ENCODE measurements at regions of chr1 and their contacts with region 1.

Region 1: GRCh38 chr1:3624200-3625136 is at the start of gene TPRG1L:
- DNase-seq: peak; percentile 99
- ATAC-seq: peak; percentile 98
- H3K4me3 Mint-ChIP-seq: peak within 1 kb of the TSS; percentile 89
- H3K27ac Mint-ChIP-seq: peak within 1 kb of the TSS; percentile 69
- H3K4me1 Mint-ChIP-seq: peaks cover 31% of the 10 kb centered on the region
- H3K27me3 Mint-ChIP-seq: no peaks in the 10 kb centered on the region
- total RNA-seq, gene TPRG1L: 6.7 to 7.2 TPM

Region 2: DNA sequence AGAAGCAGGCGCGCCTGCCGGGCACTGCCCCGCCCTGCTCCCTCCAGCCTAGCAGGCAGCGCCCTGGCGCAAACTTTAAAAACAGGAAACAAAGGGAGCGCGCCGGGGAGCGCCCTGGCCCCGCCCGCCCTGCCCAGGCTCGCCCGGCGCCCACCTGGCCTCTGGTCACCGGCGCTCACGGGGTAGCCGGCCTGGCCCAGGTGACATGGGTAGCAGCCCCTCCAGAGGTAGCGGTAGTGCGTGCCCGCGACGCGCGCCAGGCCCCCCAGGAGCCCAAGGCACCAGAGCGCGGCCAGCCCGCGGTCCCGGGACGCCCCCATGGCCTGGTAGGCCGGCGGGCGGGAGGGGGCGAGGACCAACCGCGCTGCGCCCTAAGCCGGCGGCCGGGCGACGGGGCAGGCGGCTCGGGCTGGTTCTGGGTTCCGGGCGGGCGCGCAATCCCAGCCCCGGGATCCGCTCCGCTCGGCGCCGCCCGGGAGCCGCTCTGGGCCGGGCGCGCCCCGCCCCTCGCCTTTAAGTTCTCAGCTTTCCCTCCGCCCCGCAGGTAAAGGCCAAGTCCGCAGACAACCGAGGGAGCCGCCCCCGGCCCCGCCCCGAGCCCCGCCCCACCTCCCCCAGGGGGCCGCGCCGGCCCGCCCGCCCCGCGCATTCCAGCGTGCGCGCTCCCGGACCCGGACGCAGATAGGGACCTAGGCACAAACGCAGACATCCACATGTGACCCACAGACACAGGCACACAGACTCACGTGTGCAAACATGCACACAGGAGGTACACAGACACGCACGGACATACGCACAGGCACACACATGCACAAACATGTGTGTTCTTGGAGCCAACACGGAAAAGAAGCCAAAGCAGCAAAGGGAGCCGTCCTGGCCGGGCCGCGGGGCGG is 93.3 kb before region 1 on chr1:
- CTCF ChIA-PET with region 1: no interaction called
- POLR2A ChIA-PET with region 1: no interaction called
- intact Hi-C with region 1: loop called in 1 of 2 experiments (anchors 1 kb)
- DNase-seq: peak; percentile 88
- ATAC-seq: peak; percentile 87
- H3K4me3 Mint-ChIP-seq: peak overlapping the region; percentile 69
- H3K27ac Mint-ChIP-seq: peak overlapping the region; percentile 87
- H3K4me1 Mint-ChIP-seq: peaks cover 13% of the 10 kb centered on the region
- H3K27me3 Mint-ChIP-seq: no peaks in the 10 kb centered on the region

Region 3: DNA sequence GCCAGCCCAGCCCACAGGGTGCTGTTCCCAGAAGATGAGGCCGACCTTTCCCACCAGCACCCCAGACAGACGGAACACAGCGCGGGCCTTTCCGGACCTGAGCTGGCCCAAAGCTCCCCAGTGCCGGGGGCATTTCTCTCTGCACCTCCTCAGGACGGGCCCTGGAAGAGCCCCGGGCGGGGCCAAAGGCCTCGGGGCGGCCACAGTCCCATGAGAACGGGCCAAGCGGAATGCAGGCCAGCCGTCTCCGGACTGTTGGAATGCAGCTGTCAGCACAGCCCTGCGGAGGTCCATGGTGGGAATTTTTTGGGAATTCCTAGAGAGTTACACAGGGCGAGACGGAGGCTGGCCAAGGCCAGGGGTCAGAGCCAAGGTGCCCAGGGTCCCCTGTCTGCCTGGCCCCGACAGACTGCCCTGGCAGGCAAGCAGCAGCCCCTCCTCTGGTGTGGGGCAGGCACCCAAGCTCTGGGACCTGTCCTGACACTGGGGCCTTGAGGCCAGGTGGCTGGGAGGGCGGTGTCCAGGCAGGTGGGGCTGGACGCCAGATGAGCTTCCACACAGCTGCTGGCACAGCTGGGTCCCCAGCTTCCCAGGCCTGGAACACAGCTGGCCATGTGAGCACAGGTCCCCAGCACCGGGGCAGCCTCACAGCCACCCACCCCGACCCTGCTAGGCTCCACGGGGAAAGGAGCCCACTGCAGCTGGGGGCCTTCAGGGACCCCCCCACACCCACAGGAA is 76.1 kb before region 1 on chr1:
- CTCF ChIA-PET with region 1: no interaction called
- POLR2A ChIA-PET with region 1: no interaction called
- intact Hi-C with region 1: no loop called
- DNase-seq: no peak
- ATAC-seq: no peak
- H3K4me3 Mint-ChIP-seq: no peak overlapping the region
- H3K27ac Mint-ChIP-seq: no peak overlapping the region
- H3K4me1 Mint-ChIP-seq: no peaks in the 10 kb centered on the region
- H3K27me3 Mint-ChIP-seq: no peaks in the 10 kb centered on the region

Region 4: DNA sequence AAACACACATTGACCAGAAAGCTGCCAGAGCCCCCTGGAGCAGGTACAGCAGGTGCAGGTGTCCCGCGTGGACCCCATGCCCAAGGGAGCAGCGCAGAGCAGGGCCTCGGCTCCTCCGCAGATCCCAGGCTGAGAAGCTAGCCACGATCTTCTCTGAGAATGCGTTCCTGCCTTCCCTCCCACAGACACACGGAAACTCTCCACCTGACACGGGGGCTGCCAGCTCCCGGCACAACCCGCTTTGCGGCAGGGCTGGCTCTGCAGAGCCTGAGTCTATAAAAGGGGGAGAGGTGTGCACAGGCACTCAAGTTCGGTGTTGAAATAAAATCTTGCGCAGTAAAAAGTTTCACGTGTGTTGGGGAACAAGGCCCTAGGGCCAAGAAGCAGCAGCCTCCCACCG is 22.7 kb before region 1 on chr1:
- CTCF ChIA-PET with region 1: no interaction called
- POLR2A ChIA-PET with region 1: no interaction called
- intact Hi-C with region 1: no loop called
- DNase-seq: no peak
- ATAC-seq: no peak
- H3K4me3 Mint-ChIP-seq: no peak overlapping the region
- H3K27ac Mint-ChIP-seq: no peak overlapping the region
- H3K4me1 Mint-ChIP-seq: peaks cover 15% of the 10 kb centered on the region
- H3K27me3 Mint-ChIP-seq: peaks cover 1% of the 10 kb centered on the region

Region 5: GRCh38 chr1:3649342-3650247 is 25.1 kb after region 1 on chr1 and contains the start of gene WRAP73:
- CTCF ChIA-PET with region 1: interaction called, 11 read pairs
- POLR2A ChIA-PET with region 1: no interaction called
- intact Hi-C with region 1: loop called (anchors 1 kb)
- DNase-seq: peak; percentile 96
- ATAC-seq: peak; percentile 97
- H3K4me3 Mint-ChIP-seq: peak within 1 kb of the TSS; percentile 71
- H3K27ac Mint-ChIP-seq: no peak within 1 kb of the TSS
- H3K4me1 Mint-ChIP-seq: peaks cover 24% of the 10 kb centered on the region
- H3K27me3 Mint-ChIP-seq: peaks cover 17% of the 10 kb centered on the region
- total RNA-seq, gene WRAP73: 26.3 to 28.9 TPM

Region 6: GRCh38 chr1:3746830-3747521 is 122.5 kb after region 1 on chr1:
- CTCF ChIA-PET with region 1: no interaction called
- POLR2A ChIA-PET with region 1: no interaction called
- intact Hi-C with region 1: loop called in 1 of 2 experiments (anchors 1 kb)
- DNase-seq: peak; percentile 95
- ATAC-seq: peak; percentile 99
- H3K4me3 Mint-ChIP-seq: peak overlapping the region; percentile 77
- H3K27ac Mint-ChIP-seq: peak overlapping the region; percentile 51
- H3K4me1 Mint-ChIP-seq: peaks cover 32% of the 10 kb centered on the region
- H3K27me3 Mint-ChIP-seq: no peaks in the 10 kb centered on the region

Region 7: DNA sequence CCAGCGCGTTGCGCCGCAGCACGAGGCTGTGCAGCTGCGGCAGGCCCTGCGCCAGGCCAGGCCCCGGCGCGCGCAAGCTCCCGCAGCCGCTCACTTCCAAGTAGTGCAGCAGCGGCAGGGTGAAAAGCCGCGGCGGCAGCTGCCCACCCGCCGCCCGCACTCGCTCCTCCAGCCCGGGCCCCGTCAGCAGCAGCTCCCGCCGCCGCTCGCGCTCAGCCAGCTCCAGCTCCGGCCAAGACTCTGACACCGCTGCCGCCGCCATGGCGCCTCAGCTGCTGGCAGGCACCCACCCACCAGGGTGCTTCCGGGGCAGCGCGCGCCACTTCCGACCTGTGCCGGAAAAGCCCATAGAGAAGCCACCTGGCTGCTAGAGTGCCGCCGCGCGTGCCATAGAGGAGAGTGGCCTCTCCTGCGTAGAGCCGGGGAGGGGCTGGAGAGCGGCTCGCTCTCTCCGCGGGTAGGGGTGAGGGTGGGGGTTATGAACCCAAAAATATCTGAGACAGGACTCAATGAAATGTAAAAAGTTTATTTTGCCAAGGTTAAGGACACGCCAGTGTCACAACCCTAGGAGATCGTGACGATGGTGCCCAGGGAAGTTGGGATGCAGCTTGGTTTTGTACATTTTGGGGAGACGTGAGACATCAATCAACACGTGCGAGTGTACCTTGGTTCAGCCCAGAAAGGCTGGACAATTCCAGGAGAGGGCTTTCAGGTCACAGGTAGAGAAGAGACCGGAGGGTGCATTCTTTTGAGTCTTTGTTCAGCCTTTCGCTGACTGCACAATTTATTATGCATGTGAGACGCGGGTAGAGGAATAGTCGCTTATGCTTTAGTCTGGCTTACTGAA is 172.0 kb after region 1 on chr1 and contains the start of gene LRRC47:
- CTCF ChIA-PET with region 1: interaction called, 3 read pairs
- POLR2A ChIA-PET with region 1: no interaction called
- intact Hi-C with region 1: loop called in 1 of 2 experiments (anchors 1 kb)
- DNase-seq: peak; percentile 97
- ATAC-seq: peak; percentile 99
- H3K4me3 Mint-ChIP-seq: peak within 1 kb of the TSS; percentile 81
- H3K27ac Mint-ChIP-seq: peak within 1 kb of the TSS; percentile 87
- H3K4me1 Mint-ChIP-seq: peaks cover 44% of the 10 kb centered on the region
- H3K27me3 Mint-ChIP-seq: peaks cover 6% of the 10 kb centered on the region
- total RNA-seq, gene LRRC47: 34.8 to 38.7 TPM

Region 8: GRCh38 chr1:3900119-3900968 is 275.9 kb after region 1 on chr1 and contains the start of gene C1orf174:
- CTCF ChIA-PET with region 1: no interaction called
- POLR2A ChIA-PET with region 1: no interaction called
- intact Hi-C with region 1: loop called in 1 of 2 experiments (anchors 1 kb)
- DNase-seq: peak; percentile 94
- ATAC-seq: peak; percentile 76
- H3K4me3 Mint-ChIP-seq: peak within 1 kb of the TSS; percentile 87
- H3K27ac Mint-ChIP-seq: peak within 1 kb of the TSS; percentile 98
- H3K4me1 Mint-ChIP-seq: peaks cover 51% of the 10 kb centered on the region
- H3K27me3 Mint-ChIP-seq: no peaks in the 10 kb centered on the region
- total RNA-seq, gene C1orf174: 39.8 to 49.4 TPM

Region 9: GRCh38 chr1:4212796-4213195 is 588.3 kb after region 1 on chr1:
- CTCF ChIA-PET with region 1: no interaction called
- POLR2A ChIA-PET with region 1: no interaction called
- intact Hi-C with region 1: no loop called
- DNase-seq: no peak
- ATAC-seq: no peak
- H3K4me3 Mint-ChIP-seq: no peak overlapping the region
- H3K27ac Mint-ChIP-seq: no peak overlapping the region
- H3K4me1 Mint-ChIP-seq: no peaks in the 10 kb centered on the region
- H3K27me3 Mint-ChIP-seq: peaks cover 7% of the 10 kb centered on the region

Measured in activated CD4-positive, alpha-beta T cell treated with anti-CD3 and anti-CD28 coated beads for 36 hours (primary cell).